ENCODE measurements at regions of chr6 and their contacts with region 1.

Region 1: DNA sequence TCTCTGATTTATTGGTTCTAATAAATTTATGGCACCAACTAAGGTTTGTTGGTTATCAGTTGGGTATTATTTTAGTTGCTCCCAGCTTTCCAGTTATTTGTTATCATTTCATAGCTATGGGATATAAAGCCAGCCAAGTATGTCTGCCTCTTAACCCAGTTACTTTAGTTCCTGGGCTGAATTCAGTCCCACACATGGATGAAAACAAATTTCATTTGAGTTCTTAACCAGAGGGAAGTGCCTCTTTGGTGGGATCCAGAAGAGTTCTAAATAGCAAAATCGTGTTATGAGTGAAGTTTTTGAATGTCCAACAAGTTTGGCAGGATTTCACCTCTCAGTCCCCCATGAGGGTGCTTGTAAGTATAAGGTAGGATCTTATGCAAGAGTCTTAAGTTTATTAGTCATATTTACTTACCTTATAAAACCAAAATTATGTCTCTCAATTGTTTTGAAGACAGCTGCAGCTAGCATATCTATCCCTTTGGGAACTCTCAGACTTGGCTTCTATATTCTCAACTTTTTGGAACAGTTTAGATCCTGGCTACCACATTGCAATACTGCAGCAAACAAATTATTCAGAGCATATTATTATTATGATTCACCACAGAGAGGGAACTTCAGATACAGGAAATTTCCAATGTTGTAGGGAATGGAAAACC is 683.6 kb downstream of the BCKDHB start:
- DNase-seq: peak; percentile 35
- ATAC-seq: peak; percentile 82
- H3K4me3 ChIP-seq: no peak overlapping the region
- H3K27ac ChIP-seq: no peak overlapping the region
- H3K4me1 ChIP-seq: no peaks in the 10 kb centered on the region; the same call in 1 of the 2 replicates
- H3K27me3 ChIP-seq: no peaks in the 10 kb centered on the region
- CTCF ChIP-seq: no peak
- POLR2A ChIP-seq: no peak
- RAD21 ChIP-seq: no peak

Region 2: DNA sequence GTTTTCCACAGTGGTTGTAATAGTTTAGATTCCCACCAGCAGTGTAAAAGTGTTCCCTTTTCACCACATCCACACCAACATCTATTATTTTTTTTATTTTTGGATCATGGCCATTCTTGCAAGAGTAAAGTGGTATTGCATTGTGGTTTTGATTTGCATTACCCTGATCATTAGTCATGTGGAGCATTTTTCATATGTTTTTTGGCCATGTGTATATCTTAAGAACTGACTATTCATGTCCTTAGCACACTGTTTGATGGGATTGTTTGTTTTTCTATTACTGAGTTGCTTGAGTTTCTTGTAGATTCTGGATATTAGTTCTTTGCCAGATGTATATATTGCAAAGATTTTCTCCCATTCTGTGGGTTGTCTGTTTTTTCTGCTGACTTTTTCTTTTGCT is 142.3 kb after region 1 on chr6:
- CTCF ChIA-PET with region 1: no interaction called
- POLR2A ChIA-PET with region 1: no interaction called
- dilution Hi-C with region 1: no loop called
- in situ Hi-C with region 1: no loop called
- intact Hi-C with region 1: loop called (anchors 5 kb)
- DNase-seq: peak; percentile 63
- ATAC-seq: peak; percentile 66
- H3K4me3 ChIP-seq: no peak overlapping the region
- H3K27ac ChIP-seq: no peak overlapping the region
- H3K4me1 ChIP-seq: no peaks in the 10 kb centered on the region
- H3K27me3 ChIP-seq: no peaks in the 10 kb centered on the region
- CTCF ChIP-seq: no peak
- POLR2A ChIP-seq: no peak
- RAD21 ChIP-seq: no peak

Region 3: DNA sequence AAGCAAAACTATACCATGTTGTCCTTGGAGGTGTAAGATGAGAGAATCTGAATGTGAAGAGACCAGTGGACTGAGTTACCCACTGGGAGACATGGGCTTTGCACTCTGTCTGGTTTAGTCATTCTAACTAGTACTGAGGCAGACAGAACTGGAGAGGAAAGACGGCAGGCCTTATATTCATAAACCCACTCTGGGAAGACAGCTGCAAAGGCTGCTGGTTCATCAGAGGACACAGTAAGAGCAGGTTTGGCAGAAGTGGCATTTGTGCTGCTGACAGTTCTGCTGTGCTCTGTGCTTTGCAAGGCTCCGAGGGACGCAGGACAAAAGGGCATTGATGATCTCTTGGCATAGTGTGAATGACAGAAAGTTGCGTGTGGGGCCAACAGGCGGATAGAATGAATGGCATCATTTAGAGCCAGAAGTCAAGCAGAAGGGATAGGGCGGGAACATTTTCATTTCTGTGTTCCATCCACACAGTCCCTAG is 1104.8 kb after region 1 on chr6:
- CTCF ChIA-PET with region 1: no interaction called
- POLR2A ChIA-PET with region 1: no interaction called
- dilution Hi-C with region 1: no loop called
- in situ Hi-C with region 1: no loop called
- intact Hi-C with region 1: no loop called
- DNase-seq: peak; percentile 39
- ATAC-seq: peak; percentile 35
- H3K4me3 ChIP-seq: peak overlapping the region; percentile 0; the same call in 1 of the 2 replicates
- H3K27ac ChIP-seq: peak overlapping the region; percentile 75
- H3K4me1 ChIP-seq: peaks cover 21% of the 10 kb centered on the region
- H3K27me3 ChIP-seq: no peaks in the 10 kb centered on the region
- CTCF ChIP-seq: no peak
- POLR2A ChIP-seq: no peak
- RAD21 ChIP-seq: no peak

Measured in IMR-90 (cell line).